ENCODE measurements at regions of chr11 and their contacts with region 1.

Region 1: GRCh38 chr11:115616971-115617370 is 112.8 kb upstream of the CADM1 start:
- DNase-seq: peak; percentile 69
- H3K4me3 ChIP-seq: no peak overlapping the region
- CTCF ChIP-seq: no peak

Region 2: GRCh38 chr11:115317277-115318185 is 299.4 kb before region 1 on chr11:
- in situ Hi-C with region 1: no loop called
- DNase-seq: no peak
- H3K4me3 ChIP-seq: no peak overlapping the region
- CTCF ChIP-seq: no peak

Region 3: DNA sequence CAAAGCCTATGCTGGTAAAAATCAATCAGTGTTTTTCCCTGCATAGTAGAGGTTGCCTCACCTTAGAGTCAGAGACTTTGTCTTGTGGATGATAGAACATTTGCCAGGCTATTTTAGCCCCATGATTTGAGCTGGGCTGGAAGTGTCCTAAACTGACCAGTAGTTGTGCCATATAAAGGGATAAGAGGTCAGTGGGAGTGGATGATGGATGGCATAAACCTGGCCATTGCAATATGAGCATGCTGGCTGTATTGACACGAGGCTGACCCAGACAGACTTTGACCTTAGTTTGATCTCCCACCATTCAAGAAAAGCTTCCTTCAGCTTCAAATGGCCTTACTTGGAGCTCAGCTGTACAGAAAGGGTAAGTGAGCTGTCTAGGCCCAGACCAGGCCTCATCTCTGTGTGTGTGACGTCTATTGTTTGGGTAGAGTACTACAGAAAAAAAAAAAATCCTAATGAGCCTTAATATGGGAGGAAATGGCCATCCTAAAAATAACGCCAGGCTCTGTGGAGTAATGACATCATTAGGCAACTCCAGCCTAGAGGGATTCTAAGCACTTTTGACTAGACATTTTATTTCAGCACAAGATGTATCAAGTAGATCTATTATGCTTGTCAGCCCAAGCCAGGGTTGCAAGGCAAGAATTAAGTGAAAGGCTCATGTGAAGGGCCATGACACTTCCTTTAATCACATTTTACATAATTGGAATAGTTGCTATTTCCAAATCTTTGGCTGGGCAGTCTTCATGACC is 61.5 kb before region 1 on chr11:
- in situ Hi-C with region 1: loop called (anchors 5 kb)
- DNase-seq: no peak
- H3K4me3 ChIP-seq: no peak overlapping the region
- CTCF ChIP-seq: no peak

Region 4: GRCh38 chr11:115566180-115566764 is 50.7 kb before region 1 on chr11:
- in situ Hi-C with region 1: no loop called
- DNase-seq: no peak
- H3K4me3 ChIP-seq: no peak overlapping the region
- CTCF ChIP-seq: no peak

Region 5: GRCh38 chr11:115659061-115659963 is 42.3 kb after region 1 on chr11:
- in situ Hi-C with region 1: no loop called
- DNase-seq: no peak
- H3K4me3 ChIP-seq: peak overlapping the region; percentile 42
- CTCF ChIP-seq: no peak

Region 6: GRCh38 chr11:115672999-115673411 is 56.0 kb after region 1 on chr11:
- in situ Hi-C with region 1: no loop called
- DNase-seq: peak; percentile 72
- H3K4me3 ChIP-seq: no peak overlapping the region
- CTCF ChIP-seq: no peak

Measured in astrocyte of the cerebellum (primary cell).